Endothelial cell of umbilical vein (primary cell): ENCODE measurements at regions of chrX and their contacts with region 1.

Region 1: GRCh38 chrX:109732780-109733657 is at the start of gene ACSL4:
- DNase-seq: peak; percentile 82
- H3K4me3 ChIP-seq: peak within 1 kb of the TSS; percentile 58 to 86 (median 70)
- H3K27ac ChIP-seq: peak within 1 kb of the TSS; percentile 89
- H3K4me1 ChIP-seq: peaks cover 26% of the 10 kb centered on the region
- H3K27me3 ChIP-seq: no peaks in the 10 kb centered on the region
- CTCF ChIP-seq: no peak
- POLR2A ChIP-seq: peak; percentile 83
- total RNA-seq, gene ACSL4: 85.5 and 88.9 TPM in 2 replicates

Region 2: GRCh38 chrX:109709129-109709631 is 23.8 kb before region 1 on chrX:
- CTCF ChIA-PET with region 1: interaction called, 22 read pairs
- POLR2A ChIA-PET with region 1: interaction called, 4 read pairs
- dilution Hi-C with region 1: no loop called
- intact Hi-C with region 1: loop called (anchors 1 kb)
- DNase-seq: peak; percentile 6
- H3K4me3 ChIP-seq: no peak overlapping the region
- H3K27ac ChIP-seq: peak overlapping the region; percentile 5
- H3K4me1 ChIP-seq: peaks cover 12% of the 10 kb centered on the region
- H3K27me3 ChIP-seq: no peaks in the 10 kb centered on the region
- CTCF ChIP-seq: no peak
- POLR2A ChIP-seq: no peak

Region 3: DNA sequence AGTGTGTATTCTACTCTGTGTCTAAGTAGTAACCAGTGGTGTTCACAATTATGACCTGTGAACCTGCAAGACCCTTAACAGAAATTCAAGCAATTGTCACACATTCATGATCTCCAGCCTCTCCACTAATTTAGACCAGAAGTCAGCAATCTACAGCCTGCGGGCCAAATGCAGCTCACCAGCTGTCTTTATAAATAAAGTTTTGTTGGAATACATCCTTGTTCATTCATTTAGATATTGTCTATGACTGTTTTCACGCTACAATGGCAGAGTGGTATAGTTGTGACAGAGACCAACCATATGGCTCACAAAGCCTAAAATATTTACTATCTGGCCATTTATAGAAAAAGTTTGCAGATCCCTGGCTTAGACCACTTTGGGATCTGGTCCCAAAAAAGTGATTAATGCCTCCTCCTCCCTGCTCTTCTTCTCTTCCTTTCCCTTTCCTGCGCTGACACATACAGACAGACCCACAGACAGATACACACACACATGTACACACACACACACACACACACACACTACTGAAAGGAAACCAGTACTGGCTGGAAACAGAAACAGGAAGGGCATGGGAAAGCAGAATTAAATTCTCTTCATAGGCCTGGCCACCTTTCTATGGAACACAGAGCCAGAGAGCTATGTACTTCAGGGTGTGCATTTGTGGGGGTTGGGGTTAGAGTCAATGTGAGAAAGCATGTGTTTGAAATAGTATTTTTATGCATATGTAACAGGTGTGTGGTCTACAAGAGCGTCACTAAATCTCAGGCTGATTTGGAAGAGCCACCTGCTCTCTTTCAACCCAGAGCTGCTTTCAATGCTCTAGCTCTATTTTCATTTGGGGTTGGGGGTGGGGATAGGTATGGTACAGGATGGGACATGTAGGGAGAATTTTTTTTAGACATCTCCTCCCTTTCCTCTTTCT is 220.2 kb after region 1 on chrX:
- CTCF ChIA-PET with region 1: no interaction called
- POLR2A ChIA-PET with region 1: no interaction called
- dilution Hi-C with region 1: no loop called
- intact Hi-C with region 1: loop called (anchors 1 kb)
- DNase-seq: peak; percentile 27
- H3K4me3 ChIP-seq: no peak overlapping the region
- H3K27ac ChIP-seq: peak overlapping the region; percentile 67
- H3K4me1 ChIP-seq: peaks cover 23% of the 10 kb centered on the region
- H3K27me3 ChIP-seq: no peaks in the 10 kb centered on the region
- CTCF ChIP-seq: no peak
- POLR2A ChIP-seq: no peak